ENCODE measurements at regions of chr6 and their contacts with region 1.

Region 1: DNA sequence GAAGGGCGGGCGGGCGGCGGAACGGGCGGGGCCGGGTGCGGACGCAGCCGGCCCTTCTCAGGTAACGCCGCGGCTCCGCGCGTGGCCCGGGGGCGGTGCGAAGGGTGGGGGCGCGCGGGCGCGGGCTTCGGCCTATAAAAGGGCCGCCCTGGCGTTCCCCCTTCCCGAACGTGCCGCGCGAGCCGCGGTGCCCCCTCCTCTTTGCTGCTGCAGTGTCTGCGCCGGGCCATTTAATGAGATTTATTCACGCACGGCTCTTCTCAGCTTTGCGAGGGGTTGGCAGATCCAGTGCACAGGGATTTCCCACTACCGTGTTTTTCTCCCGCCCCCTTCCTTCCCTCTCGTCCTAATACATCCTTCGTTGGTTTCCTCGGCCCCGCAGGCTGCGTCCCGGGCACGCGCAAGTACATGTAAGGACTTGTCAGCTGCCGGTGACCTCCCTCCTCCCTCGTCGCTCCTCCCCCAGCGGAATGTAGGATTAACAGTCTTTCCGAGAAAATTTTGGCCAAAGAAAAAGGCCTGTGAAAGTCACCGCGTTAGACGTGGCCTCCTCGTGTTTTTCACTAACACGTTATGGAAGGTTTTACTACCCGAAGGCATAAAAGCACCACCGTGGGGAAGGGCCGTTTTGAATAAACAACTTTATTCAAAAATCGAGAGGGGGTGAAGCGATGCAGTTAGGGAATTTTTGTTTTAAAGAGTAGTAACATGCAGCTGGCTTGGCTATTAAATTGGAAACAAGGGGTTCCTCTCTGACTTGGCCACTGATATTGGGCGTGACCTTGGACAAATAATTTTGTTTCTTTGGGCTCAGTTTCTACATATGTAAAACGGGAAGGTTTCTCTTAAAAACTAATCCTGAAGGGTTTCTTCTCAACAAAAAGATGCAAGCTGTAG is 966 bp upstream of the REV3L start:
- DNase-seq: peak; percentile 91
- H3K4me3 ChIP-seq: peak overlapping the region; percentile 65 to 89 (median 84)
- H3K27ac ChIP-seq: peak overlapping the region; percentile 81
- H3K4me1 ChIP-seq: peaks cover 21% of the 10 kb centered on the region
- H3K27me3 ChIP-seq: no peaks in the 10 kb centered on the region
- CTCF ChIP-seq: no peak

Region 2: DNA sequence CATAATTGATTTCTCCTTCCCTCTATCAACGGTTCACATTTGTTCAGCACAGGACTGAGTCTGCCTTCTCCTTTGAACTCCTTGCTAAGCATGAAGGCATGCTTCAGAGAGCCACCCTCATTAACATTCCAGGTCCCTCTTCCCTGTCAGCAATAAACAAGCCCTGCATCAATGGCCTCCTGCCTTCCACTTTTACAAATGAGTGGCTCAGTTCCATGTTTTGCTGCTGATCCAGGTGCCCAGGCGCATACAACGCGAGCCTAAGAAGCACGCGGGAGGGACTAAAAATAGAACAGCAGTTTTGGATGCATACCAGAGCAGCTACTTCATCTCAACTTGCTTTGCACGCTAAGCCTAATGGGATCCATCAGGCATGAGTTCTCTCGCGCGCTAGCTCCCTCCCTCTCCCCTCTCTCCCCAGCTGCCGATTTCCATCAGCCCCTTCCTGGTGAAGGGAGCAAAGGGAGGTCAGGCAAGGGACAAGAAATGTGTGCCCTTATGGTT is 68.3 kb after region 1 on chr6:
- CTCF ChIA-PET with region 1: no interaction called
- dilution Hi-C with region 1: no loop called
- in situ Hi-C with region 1: no loop called
- intact Hi-C with region 1: loop called (anchors 1 kb)
- DNase-seq: peak; percentile 80
- H3K4me3 ChIP-seq: no peak overlapping the region
- H3K27ac ChIP-seq: peak overlapping the region; percentile 11
- H3K4me1 ChIP-seq: peaks cover 36% of the 10 kb centered on the region
- H3K27me3 ChIP-seq: no peaks in the 10 kb centered on the region
- CTCF ChIP-seq: no peak

Region 3: DNA sequence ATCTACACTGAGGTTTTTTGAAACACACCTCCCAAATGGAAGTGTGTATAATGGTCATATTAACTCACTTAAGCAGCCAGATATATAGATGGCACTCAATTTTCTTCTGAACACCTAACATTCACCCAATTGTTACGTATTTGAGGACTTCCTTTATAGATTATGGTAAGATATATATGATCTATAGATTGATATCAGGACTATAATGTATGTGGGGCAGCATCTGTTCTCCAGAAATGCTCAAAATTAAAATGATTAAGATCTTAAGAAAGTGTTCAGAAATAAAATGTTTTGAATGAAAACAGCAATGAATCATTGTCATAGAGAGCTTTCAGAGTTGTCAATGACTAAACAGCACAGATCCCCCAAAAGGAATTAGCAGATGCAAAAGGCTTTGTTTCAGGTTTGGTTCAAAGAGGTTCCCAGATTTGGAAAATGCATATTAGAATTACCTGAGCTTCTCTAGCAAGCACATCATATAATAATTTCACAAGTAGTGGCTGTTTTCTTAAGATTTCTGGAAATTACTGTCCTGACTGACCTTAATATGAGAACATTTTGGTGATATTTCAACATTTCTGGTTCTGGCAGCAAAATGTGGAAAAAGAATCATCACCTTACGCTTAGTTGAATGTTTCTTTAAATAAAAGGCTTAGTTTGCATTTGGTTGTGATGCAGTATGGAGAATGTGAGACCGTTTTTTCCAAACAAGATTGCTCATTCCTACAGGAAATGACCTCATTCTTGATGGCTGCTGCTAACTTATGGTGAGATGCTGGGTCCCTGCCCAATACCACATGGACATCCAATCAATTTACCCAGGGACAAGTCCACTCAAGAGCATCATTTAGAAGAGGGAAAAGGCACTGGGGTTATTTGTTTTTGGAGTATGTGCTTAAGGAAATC is 90.2 kb after region 1 on chr6:
- CTCF ChIA-PET with region 1: no interaction called
- dilution Hi-C with region 1: loop called (anchors 5 kb)
- in situ Hi-C with region 1: no loop called
- intact Hi-C with region 1: loop called (anchors 2 kb)
- DNase-seq: peak; percentile 80
- H3K4me3 ChIP-seq: no peak overlapping the region
- H3K27ac ChIP-seq: peak overlapping the region; percentile 66
- H3K4me1 ChIP-seq: peaks cover 36% of the 10 kb centered on the region
- H3K27me3 ChIP-seq: no peaks in the 10 kb centered on the region
- CTCF ChIP-seq: no peak

Region 4: DNA sequence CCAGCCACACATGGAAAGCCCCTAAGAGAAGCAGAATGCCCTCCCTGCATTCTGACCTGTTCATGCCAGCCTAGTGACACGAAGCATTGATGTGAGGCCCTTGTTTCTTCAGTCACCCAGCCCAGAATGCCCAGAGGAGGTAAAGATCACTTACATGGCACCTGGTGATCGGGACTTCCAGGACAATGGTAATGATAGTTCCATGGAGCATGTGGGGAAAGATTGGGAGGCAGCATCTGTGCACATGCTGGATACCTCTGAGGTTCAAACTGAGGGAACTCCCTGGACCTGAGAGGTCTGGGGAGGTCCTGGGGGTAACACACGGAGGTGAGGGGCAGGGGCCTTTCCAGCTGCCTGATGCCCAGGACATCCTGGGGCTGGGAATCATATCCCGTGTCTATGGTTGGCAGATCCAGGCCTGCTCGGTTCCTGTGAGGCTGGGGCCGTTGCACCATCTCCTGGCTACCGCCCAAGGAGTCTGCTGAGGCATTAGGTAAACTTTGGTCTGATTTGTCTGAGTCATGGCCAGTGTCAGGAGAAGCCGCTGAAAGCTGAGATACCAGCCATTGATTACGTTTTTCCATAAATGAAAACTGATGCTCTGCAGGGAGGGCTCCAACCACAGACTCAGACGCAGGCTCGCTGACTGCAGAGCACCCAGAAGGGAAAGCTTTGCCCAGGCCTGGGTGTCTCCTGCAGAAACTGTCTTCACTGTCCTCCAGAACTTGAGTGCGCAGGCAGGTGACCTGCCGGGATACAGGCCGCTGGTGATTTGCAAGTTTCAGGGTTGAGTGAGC is 107.3 kb after region 1 on chr6:
- CTCF ChIA-PET with region 1: no interaction called
- dilution Hi-C with region 1: no loop called
- in situ Hi-C with region 1: no loop called
- intact Hi-C with region 1: loop called (anchors 1 kb)
- DNase-seq: peak; percentile 99
- H3K4me3 ChIP-seq: peak overlapping the region in 1 of 3 experiments; percentile 11
- H3K27ac ChIP-seq: peak overlapping the region; percentile 87
- H3K4me1 ChIP-seq: peaks cover 66% of the 10 kb centered on the region
- H3K27me3 ChIP-seq: no peaks in the 10 kb centered on the region
- CTCF ChIP-seq: no peak

Region 5: DNA sequence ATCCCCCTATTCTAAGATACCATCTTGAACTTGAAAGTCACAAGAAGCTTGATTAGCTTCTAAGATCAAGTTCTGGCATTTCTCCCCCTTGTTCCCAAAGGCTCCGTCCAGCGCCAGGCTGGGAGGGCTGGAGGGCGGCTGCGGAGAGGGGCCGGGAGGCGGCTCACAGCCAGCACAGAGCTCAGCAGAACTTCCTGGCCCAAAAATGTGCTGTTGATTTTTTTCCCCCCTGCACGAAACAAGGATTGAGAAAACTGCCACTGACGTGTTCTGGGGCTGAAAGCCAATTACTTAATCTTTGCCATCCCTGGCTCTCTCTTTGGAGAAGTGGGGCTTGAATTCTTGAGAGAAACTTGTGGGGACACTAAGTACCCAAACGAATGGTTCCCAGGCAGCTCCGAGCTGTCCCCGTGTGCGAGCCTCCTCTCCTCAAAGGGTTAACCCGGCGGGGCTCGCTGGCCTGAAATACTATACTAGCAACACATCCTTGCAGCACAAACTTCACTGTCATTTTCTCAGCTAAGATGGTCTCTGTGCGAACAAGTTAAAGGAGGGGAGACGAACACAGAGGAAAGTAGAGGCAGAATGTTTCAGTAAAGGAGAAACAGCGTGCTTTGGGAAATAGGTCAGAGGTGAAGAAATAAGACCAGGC is 121.2 kb after region 1 on chr6:
- CTCF ChIA-PET with region 1: no interaction called
- dilution Hi-C with region 1: no loop called
- in situ Hi-C with region 1: no loop called
- intact Hi-C with region 1: loop called (anchors 1 kb)
- DNase-seq: peak; percentile 54
- H3K4me3 ChIP-seq: peak overlapping the region; percentile 61 to 85 (median 83)
- H3K27ac ChIP-seq: peak overlapping the region; percentile 97
- H3K4me1 ChIP-seq: peaks cover 41% of the 10 kb centered on the region
- H3K27me3 ChIP-seq: no peaks in the 10 kb centered on the region
- CTCF ChIP-seq: no peak

Measured in mammary epithelial cell (primary cell).